Left cardiac atrium (tissue), 4 donors: ENCODE measurements at regions of chr17 and their contacts with region 1.

Region 1: DNA sequence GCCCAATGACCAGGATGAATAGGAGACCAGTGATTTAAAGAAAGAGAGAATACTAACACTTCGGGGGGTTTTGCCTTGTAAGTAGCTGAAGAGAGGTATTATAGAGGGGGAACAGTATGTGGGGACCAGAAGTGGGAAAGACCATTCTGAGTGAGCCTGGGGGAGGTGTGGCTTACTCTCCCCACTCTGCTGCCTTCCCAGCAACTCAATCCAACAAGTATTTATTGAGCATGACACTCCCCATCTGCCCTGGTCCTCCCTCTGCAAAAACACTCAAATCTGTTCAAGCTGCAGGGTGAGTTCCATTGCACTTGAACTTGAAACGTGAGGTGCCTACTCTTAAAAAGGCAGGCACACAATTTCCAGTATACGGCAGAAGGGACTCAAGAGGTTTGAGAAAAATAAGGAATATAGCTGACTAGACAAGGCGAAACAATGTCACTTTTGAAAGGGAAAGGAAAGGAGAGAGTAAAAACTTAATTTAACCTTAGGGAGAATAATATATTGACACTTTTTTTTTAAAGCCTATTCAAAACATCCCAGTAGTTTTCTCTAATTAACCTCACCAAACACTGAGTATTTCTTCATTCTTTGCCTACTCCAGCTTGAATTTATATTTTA is 8.2 kb downstream of the FAM117A start:
- DNase-seq: no peak
- ATAC-seq: no peak

Region 2: GRCh38 chr17:49723423-49723822 is 32.4 kb before region 1 on chr17:
- intact Hi-C with region 1: loop called in 1 of 2 experiments (anchors 5 kb)
- DNase-seq: peak; percentile 55
- ATAC-seq: peak; percentile 74 to 88